Activated CD4-positive, alpha-beta T cell treated with anti-CD3 and anti-CD28 coated beads, Interleukin-2, amount 10 ng/mL, durations not matched to agents 24 days and 14 days (primary cell): ENCODE measurements at regions of chr22 and their contacts with region 1.

Region 1: DNA sequence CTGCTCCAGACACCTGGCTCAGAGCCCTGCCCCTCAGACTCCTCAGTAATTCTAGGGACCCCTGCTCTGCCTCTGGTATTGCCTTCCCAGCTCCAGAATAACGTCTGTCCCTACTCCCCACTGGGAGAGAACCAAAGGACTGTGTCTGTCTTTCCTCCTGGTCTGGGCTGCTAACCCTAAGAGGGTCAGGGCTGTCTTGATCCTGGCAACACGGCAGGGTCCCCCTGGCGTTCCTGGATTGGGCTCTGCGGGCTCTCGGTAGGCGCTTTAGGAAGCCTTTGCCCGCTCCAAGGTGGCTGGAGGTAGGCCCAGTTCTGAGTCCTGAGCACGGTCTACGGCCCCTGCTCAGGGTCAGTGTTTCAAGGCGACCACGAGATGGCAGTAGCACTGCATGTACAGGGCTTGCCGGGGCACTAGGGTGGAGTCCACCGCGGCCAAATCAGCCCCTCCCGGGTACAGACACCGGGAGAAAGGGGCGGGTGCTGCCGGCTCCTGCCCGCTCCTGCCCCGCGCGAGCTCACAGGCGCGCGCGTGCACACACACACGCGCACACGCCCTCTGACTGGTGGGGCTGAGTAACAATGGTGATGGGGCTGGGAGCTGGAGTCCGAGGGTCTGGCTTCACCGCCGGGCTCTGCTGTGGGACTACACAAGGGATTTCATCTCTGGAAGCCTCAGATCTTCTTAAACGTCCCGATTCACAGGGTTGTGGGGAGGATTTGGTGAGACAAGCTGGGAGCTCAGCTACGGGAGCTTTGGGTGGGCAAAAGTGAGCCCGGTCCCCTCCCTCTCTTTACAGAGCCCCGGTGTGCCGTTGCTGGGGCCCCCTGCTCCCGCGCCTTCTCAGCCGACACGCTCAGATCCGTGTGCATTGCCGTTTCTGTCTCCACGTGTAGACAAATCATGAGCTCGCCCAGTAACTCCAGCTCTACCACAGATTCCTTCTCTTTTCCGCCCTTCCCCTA is 30.1 kb upstream of the HMOX1 start:
- DNase-seq: peak; percentile 96
- H3K4me3 Mint-ChIP-seq: peak overlapping the region; percentile 89
- H3K27ac Mint-ChIP-seq: peak overlapping the region; percentile 76
- H3K4me1 Mint-ChIP-seq: peaks cover 27% of the 10 kb centered on the region
- H3K27me3 Mint-ChIP-seq: peaks cover 4% of the 10 kb centered on the region

Region 2: GRCh38 chr22:35337932-35338331 is 12.9 kb before region 1 on chr22:
- intact Hi-C with region 1: no loop called
- DNase-seq: no peak
- H3K4me3 Mint-ChIP-seq: no peak overlapping the region
- H3K27ac Mint-ChIP-seq: no peak overlapping the region
- H3K4me1 Mint-ChIP-seq: peaks cover 23% of the 10 kb centered on the region
- H3K27me3 Mint-ChIP-seq: no peaks in the 10 kb centered on the region

Region 3: GRCh38 chr22:35430897-35431322 is 80.1 kb after region 1 on chr22:
- intact Hi-C with region 1: loop called (anchors 2 kb)
- DNase-seq: peak; percentile 90
- H3K4me3 Mint-ChIP-seq: no peak overlapping the region
- H3K27ac Mint-ChIP-seq: no peak overlapping the region
- H3K4me1 Mint-ChIP-seq: no peaks in the 10 kb centered on the region
- H3K27me3 Mint-ChIP-seq: no peaks in the 10 kb centered on the region

Region 4: GRCh38 chr22:35627264-35628041 is 276.6 kb after region 1 on chr22:
- intact Hi-C with region 1: loop called (anchors 1 kb)
- DNase-seq: peak; percentile 80
- H3K4me3 Mint-ChIP-seq: peak overlapping the region; percentile 84
- H3K27ac Mint-ChIP-seq: peak overlapping the region; percentile 84
- H3K4me1 Mint-ChIP-seq: peaks cover 28% of the 10 kb centered on the region
- H3K27me3 Mint-ChIP-seq: peaks cover 4% of the 10 kb centered on the region

Region 5: DNA sequence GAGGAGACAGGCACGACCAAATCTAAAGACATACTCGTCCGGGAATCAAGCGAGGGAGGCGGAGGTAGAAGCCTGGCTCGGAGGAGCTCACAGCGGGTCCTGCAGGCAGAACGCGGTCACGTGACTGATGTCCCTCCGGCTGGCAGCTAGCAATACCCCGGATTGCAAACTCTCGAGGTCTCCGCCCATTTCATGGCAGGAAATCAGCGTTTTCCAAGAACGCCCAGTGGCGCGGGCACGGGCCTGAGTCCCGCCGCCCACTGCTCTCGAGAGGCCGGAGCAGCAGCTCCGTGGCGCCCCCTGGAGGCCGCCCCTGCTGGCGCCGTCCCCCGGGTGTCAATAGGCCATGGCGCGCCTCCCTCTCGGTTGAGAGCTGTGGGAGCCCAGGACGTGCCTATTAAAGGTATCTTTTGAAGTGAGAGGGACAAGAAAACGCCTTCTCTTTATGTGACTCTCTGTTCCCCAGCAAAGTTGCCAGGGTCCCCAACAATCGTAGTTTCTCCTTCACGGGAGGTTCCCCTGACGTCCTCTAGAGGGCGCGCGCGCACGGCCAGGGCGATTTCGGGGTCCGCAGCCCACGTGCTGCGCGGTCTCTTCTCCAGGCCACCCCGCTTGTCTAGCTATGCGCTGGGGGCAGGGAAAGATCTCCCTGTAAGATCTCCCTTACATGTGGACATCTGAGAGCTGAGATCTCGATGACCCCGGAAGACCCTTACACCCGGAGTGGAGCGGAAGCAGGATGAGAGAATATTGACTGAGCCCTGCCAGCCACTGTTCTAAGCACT is 715.1 kb after region 1 on chr22:
- intact Hi-C with region 1: loop called (anchors 5 kb)
- DNase-seq: peak; percentile 90
- H3K4me3 Mint-ChIP-seq: peak overlapping the region; percentile 84
- H3K27ac Mint-ChIP-seq: peak overlapping the region; percentile 89
- H3K4me1 Mint-ChIP-seq: peaks cover 8% of the 10 kb centered on the region
- H3K27me3 Mint-ChIP-seq: peaks cover 15% of the 10 kb centered on the region